ENCODE measurements at regions of chr9 and their contacts with region 1.

Region 1: DNA sequence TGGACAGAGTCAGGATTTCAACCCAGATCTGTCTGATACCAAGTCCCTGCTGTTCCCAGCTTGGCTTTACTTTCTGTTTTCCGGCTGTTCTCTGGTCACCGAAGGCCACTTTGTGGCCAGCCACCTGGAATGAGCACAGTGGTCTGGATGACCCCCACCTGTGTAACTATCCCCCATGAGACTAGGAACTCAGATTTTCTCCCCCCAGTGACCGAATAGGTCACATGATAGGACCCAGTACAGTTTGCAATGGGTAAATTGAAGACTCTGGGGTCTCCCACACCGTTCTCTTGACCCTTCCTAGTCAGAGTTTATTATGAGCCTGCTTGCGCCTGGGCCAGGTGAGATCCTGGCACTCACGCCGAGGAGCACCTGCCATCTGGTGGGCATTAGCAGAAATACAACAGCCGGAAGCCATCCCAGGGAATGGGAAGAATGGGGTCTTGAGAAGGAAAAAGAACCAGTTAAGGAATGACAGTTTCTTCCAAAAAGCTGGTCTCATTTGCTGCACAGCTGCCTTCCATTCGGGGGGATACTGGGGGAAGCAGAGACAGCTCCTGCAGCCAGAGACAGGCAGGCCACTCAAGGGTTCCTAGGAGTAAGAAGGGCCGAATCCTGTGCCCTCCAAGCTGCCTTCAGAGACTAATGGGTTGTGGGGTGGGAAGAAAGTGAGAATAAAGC is 7.1 kb downstream of the PHYHD1 start:
- DNase-seq: peak in 4 of 5 donors; percentile 44 to 61 (median 49)
- H3K4me3 ChIP-seq: no peak overlapping the region
- H3K4me3 Mint-ChIP-seq: no peak overlapping the region
- H3K27ac ChIP-seq: no peak overlapping the region
- H3K27ac Mint-ChIP-seq: peak overlapping the region in 4 of 7 donors; percentile 5 to 60 (median 20)
- H3K4me1 ChIP-seq: peaks cover 8% of the 10 kb centered on the region
- H3K4me1 Mint-ChIP-seq: peaks cover 4 to 13% (median 11%) of the 10 kb centered on the region in 4 donors
- H3K27me3 ChIP-seq: no peaks in the 10 kb centered on the region
- H3K27me3 Mint-ChIP-seq: no peaks in the 10 kb centered on the region

Region 2: GRCh38 chr9:128643519-128644300 is 284.2 kb before region 1 on chr9:
- CTCF ChIA-PET with region 1: interaction called, 10 read pairs
- POLR2A ChIA-PET with region 1: no interaction called
- intact Hi-C with region 1: no loop called
- DNase-seq: no peak
- H3K4me3 ChIP-seq: no peak overlapping the region
- H3K4me3 Mint-ChIP-seq: no peak overlapping the region
- H3K27ac ChIP-seq: no peak overlapping the region
- H3K27ac Mint-ChIP-seq: peak overlapping the region in 1 of 7 donors; percentile 19
- H3K4me1 ChIP-seq: no peaks in the 10 kb centered on the region
- H3K4me1 Mint-ChIP-seq: peaks cover 0 to 3% (median 0%) of the 10 kb centered on the region in 4 donors
- H3K27me3 ChIP-seq: no peaks in the 10 kb centered on the region
- H3K27me3 Mint-ChIP-seq: no peaks in the 10 kb centered on the region

Region 3: DNA sequence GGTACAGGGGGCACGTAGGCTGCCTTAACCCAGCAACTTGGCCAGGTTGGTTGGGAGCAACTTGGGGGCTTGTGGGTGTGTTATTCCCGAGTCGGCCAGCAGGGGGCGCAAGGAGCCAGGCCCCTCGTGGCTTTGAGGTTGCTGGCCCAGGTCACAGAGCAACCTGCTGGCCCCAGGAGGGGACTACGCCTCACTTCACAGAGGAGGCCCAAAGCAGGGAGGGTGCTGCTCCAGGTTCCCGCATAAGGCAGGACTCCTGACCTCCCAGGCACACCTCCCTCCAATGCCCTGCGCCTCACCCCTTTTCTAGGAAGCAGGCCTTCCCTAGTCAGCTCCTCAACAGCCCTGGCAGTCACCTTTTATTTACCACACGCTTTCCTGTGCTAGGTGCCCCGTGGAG is 64.2 kb before region 1 on chr9:
- CTCF ChIA-PET with region 1: interaction called, 332 read pairs
- POLR2A ChIA-PET with region 1: interaction called, 5 read pairs
- intact Hi-C with region 1: loop called (anchors 1 kb)
- DNase-seq: peak; percentile 76 to 81 (median 78)
- H3K4me3 ChIP-seq: no peak overlapping the region
- H3K4me3 Mint-ChIP-seq: no peak overlapping the region
- H3K27ac ChIP-seq: no peak overlapping the region
- H3K27ac Mint-ChIP-seq: peak overlapping the region in 2 of 7 donors; percentile 59 to 63
- H3K4me1 ChIP-seq: peaks cover 9% of the 10 kb centered on the region
- H3K4me1 Mint-ChIP-seq: peaks cover 3 to 6% (median 5%) of the 10 kb centered on the region in 4 donors
- H3K27me3 ChIP-seq: no peaks in the 10 kb centered on the region
- H3K27me3 Mint-ChIP-seq: no peaks in the 10 kb centered on the region

Region 4: DNA sequence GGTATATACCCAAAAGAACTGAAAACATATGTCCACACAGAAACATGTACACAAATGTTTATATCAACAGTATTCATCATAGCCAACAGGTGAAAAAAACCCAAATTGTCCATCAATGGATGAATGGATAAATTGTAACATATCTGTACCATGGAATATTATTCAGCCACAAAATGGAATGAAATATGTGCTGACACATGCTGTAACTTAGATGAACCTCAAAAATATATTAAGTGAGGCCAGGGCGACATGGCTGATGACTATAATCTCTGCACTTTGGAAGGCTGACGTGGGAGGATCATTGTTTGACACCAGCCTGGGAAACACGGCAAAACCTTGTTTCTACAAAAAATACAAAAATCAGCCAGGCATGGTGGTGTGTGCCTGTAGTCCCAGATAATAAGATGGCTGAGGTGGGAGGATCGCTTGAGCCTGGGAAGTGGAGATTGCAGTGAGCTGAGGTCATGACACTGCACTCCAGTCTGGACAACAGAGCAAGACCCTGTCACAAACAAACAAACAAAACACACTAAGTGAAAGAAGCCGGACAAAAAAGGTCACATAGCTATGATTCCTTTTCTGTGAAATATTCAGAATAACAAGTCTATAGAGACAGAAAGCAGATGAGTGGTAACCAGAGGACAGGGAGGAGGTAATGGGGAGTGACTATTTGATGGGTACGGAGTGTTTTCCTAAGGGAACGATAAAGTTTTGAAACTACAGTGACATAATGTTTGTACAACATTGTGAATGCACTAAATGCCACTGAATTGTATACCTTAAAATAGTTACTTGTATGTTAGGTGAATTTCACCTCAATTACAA is 57.5 kb before region 1 on chr9:
- CTCF ChIA-PET with region 1: interaction called, 332 read pairs
- POLR2A ChIA-PET with region 1: no interaction called
- intact Hi-C with region 1: no loop called
- DNase-seq: no peak
- H3K4me3 ChIP-seq: no peak overlapping the region
- H3K4me3 Mint-ChIP-seq: no peak overlapping the region
- H3K27ac ChIP-seq: no peak overlapping the region
- H3K27ac Mint-ChIP-seq: peak overlapping the region in 1 of 7 donors; percentile 22
- H3K4me1 ChIP-seq: peaks cover 3% of the 10 kb centered on the region
- H3K4me1 Mint-ChIP-seq: peaks cover 0 to 2% (median under 1%) of the 10 kb centered on the region in 4 donors
- H3K27me3 ChIP-seq: no peaks in the 10 kb centered on the region
- H3K27me3 Mint-ChIP-seq: no peaks in the 10 kb centered on the region

Region 5: DNA sequence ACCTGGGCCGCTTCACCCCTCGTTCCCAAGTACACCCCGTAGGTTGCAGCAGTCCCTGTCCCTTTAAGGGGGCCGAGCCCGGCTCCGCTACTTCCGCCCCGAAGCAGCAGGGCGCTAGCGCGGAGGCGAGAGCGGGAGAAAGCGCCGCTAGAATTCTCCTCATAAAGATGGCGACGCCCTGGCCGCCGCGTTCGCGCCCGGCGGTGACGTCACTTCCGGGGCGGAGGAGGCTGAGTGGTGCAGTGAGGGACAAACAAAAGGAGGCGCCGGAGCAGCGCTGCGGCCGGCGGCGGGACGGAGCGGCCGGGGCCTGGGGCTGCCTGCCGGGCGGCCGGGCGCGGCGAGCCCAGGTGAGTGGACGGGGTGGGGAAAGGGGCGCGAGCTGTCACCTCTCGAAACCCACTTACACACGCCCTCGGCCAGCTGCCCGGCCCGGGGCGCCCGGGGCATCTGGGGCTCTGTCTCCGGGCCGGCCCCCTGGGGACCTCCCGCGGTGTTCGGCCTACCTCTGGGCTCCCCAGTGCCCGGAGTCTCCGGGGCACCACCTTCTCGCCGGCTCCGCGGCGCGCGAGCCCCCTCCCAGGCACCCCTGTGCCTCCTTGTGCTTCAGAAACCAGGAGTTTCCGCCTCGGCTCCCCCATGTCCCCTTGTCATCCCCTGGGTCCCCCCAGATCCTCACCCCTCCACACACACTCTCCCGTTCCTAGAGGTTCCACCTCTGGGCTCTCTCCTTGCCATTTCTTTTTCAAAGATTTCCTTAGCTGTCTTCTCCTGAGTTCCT is 45.8 kb before region 1 on chr9 and contains the starts of genes KYAT1 and LRRC8A:
- CTCF ChIA-PET with region 1: interaction called, 100 read pairs
- POLR2A ChIA-PET with region 1: interaction called, 10 read pairs
- intact Hi-C with region 1: loop called (anchors 1 kb)
- DNase-seq: peak; percentile 96 to 99 (median 97)
- H3K4me3 ChIP-seq: peak within 1 kb of the TSS; percentile 95 to 99
- H3K4me3 Mint-ChIP-seq: peak within 1 kb of the TSS; percentile 94 to 99 (median 98)
- H3K27ac ChIP-seq: peak within 1 kb of the TSS; percentile 84
- H3K27ac Mint-ChIP-seq: peak within 1 kb of the TSS; percentile 92 to 98 (median 98)
- H3K4me1 ChIP-seq: peaks cover 43% of the 10 kb centered on the region
- H3K4me1 Mint-ChIP-seq: peaks cover 34 to 72% (median 56%) of the 10 kb centered on the region in 4 donors
- H3K27me3 ChIP-seq: no peaks in the 10 kb centered on the region
- H3K27me3 Mint-ChIP-seq: no peaks in the 10 kb centered on the region
- total RNA-seq, gene KYAT1: 9.8 to 12.4 TPM
- total RNA-seq, gene LRRC8A: 24.4 to 26.4 TPM

Region 6: GRCh38 chr9:128902351-128903078 is 25.4 kb before region 1 on chr9:
- CTCF ChIA-PET with region 1: interaction called, 15 read pairs
- POLR2A ChIA-PET with region 1: interaction called, 9 read pairs
- intact Hi-C with region 1: loop called (anchors 1 kb)
- DNase-seq: peak; percentile 85 to 92 (median 88)
- H3K4me3 ChIP-seq: peak overlapping the region; percentile 14 to 45
- H3K4me3 Mint-ChIP-seq: peak overlapping the region; percentile 76 to 87 (median 84)
- H3K27ac ChIP-seq: peak overlapping the region; percentile 76
- H3K27ac Mint-ChIP-seq: peak overlapping the region; percentile 84 to 99 (median 98)
- H3K4me1 ChIP-seq: peaks cover 87% of the 10 kb centered on the region
- H3K4me1 Mint-ChIP-seq: peaks cover 35 to 83% (median 65%) of the 10 kb centered on the region in 4 donors
- H3K27me3 ChIP-seq: no peaks in the 10 kb centered on the region
- H3K27me3 Mint-ChIP-seq: no peaks in the 10 kb centered on the region

Region 7: DNA sequence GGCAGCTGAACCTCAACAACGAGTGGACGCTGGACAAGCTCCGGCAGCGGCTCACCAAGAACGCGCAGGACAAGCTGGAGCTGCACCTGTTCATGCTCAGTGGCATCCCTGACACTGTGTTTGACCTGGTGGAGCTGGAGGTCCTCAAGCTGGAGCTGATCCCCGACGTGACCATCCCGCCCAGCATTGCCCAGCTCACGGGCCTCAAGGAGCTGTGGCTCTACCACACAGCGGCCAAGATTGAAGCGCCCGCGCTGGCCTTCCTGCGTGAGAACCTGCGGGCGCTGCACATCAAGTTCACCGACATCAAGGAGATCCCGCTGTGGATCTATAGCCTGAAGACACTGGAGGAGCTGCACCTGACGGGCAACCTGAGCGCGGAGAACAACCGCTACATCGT is 19.5 kb before region 1 on chr9:
- CTCF ChIA-PET with region 1: interaction called, 20 read pairs
- POLR2A ChIA-PET with region 1: interaction called, 5 read pairs
- intact Hi-C with region 1: no loop called
- DNase-seq: no peak
- H3K4me3 ChIP-seq: no peak overlapping the region
- H3K4me3 Mint-ChIP-seq: no peak overlapping the region
- H3K27ac ChIP-seq: no peak overlapping the region
- H3K27ac Mint-ChIP-seq: peak overlapping the region in 1 of 7 donors; percentile 35
- H3K4me1 ChIP-seq: peaks cover 65% of the 10 kb centered on the region
- H3K4me1 Mint-ChIP-seq: peaks cover 27 to 81% (median 51%) of the 10 kb centered on the region in 4 donors
- H3K27me3 ChIP-seq: no peaks in the 10 kb centered on the region
- H3K27me3 Mint-ChIP-seq: no peaks in the 10 kb centered on the region